Mammary epithelial cell (primary cell): ENCODE measurements at regions of chrX and their contacts with region 1.

Region 1: DNA sequence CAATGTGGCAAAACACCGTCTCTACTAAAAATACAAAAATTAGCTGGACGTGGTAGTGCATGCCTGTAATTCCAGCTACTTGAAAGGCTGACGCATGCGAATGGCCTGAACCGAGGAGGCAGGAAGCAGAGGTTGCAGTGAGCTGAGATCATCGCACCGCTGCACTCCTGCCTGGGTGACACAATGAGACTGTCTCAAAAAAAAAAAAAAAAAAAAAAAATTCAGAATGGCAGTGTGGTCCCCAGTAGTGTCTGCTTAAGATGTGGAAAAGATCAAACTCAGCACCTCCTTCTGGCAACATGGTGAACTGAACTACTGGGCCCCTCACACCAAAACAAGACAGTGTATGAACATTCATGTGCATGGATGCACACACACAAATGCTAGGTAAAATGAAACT is 32.2 kb downstream of the SMS start:
- DNase-seq: no peak
- H3K4me3 ChIP-seq: no peak overlapping the region
- H3K27ac ChIP-seq: no peak overlapping the region
- H3K4me1 ChIP-seq: peaks cover 7% of the 10 kb centered on the region
- H3K27me3 ChIP-seq: no peaks in the 10 kb centered on the region
- CTCF ChIP-seq: peak in 1 of 2 donors; percentile 12

Region 2: DNA sequence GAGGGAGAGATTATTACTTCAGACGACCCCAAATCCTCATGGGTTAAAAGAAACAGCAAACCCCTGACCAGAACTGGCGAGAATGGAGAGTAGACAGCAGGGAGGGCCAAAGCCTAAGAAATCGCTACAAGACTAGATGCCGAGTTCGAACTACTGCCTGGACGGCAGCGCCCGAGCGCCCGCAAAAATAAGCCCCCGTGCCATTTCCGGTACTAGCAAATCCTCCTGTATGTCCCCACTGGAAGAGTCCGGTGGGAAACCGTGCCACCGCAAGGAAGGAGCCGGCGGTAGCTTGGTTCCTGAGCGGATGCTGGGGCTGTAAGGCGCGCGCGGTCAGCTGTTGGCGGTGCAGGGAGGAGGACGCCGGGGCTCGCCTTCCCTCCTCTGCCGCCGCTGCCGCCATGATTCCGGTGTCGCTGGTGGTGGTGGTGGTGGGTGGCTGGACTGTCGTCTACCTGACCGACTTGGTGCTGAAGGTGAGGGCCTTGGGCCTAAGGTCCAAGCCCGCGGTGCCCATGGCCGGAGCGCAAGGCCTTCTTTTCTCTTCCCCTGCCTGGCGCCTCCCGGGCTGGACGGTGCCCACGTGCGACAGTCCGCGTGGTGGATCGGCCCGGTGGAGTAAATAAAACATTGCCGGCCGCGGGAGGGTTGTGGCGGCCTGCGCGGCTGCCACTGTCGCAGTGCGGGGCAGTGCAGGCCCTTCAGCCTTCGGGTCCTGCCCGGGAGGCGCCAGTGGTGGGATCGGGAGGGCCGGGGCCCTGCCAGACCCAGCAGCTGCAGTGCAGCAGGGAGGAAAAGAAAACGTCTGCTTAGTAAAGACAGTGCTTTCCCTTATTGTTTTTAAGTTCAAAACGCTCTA is 133.2 kb before region 1 on chrX and contains the start of gene MBTPS2:
- CTCF ChIA-PET with region 1: no interaction called
- dilution Hi-C with region 1: no loop called
- in situ Hi-C with region 1: no loop called
- intact Hi-C with region 1: loop called (anchors 2 kb)
- DNase-seq: peak; percentile 79
- H3K4me3 ChIP-seq: peak within 1 kb of the TSS; percentile 49 to 76 (median 72)
- H3K27ac ChIP-seq: peak within 1 kb of the TSS; percentile 61
- H3K4me1 ChIP-seq: no peaks in the 10 kb centered on the region
- H3K27me3 ChIP-seq: peaks cover 2% of the 10 kb centered on the region
- CTCF ChIP-seq: peak in 1 of 2 donors; percentile 14
- total RNA-seq, gene MBTPS2: 6.8 to 18.5 TPM